Left cardiac atrium (tissue), 4 donors: ENCODE measurements at regions of chr12 and their contacts with region 1.

Region 1: DNA sequence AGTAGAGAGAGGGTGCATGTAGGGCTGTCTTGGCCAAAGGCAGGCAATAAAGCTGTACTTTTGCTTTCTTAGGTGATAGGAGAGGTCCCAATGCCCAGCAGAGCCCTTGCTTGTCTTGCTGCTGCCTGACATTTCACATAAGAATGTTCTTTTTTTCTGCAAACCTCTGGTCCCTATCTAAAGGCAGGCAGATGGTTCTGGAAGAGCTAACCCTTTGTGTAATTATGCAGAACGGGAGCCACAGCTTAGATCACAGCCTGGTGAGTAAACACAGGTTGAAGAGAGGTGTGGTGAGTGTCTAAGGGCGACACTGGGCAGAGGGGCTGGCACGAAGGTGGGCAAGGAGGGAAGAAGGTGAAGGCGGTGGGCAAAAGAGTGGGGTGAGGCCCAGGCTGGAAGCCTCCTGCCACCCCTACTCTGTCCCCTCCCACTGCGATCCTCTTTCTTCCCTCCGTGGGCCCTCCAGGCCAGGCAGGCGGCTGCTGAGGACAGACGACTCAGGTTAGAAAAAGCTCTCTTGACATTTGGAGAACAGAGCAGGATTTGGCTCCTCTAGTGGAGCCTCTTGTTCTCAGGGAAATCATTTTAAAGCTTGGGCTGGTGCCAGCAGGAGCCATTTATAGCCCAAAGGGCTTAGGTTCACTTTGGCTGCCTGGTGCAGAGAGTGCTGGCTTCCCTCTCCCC is 42.8 kb downstream of the PRMT8 start:
- DNase-seq: peak; percentile 70
- ATAC-seq: peak; percentile 64 to 79

Region 2: DNA sequence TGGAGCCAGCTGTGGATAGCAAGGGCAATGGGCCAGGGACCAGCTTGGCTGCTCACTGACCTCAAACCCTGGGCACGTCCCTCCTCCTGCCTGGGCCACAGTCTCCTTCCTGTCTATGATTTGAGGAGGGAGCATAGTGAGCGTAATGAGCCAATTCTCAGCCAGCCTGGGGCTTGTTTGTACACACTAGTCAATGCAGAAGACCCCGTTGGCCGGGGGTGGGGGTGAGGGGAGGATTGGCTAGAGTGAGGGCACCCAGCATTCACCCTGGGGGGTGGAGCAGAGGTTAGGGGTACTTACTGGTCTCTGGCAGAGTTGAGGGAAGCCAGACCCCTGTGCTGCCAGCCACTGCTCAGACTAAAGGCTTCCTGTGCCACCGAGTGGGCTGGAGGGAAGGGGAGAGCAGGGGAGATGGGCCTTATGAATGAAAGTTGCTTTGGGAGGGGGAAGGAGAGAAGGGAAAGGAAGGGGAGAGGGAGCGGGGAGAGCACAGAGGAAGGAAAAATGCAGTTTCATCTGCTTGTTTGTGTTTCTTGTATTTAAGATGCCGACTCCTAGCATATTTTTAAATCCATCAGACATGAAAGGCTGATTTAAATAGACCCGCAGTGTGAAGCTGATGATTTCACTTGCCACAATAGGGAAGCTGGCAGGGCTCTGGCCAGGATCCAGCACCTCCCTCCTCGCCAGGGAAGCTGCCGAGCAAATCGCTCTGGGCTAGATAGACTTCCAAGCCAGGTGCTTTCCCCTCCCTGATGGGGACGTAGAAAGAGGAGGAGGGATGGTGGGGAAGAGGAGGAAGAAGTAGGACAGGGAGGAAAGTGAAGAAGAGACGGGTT is 71.1 kb after region 1 on chr12:
- intact Hi-C with region 1: loop called in 1 of 2 experiments (anchors 5 kb)
- DNase-seq: peak; percentile 72
- ATAC-seq: peak; percentile 79 to 83

Region 3: GRCh38 chr12:3920351-3921150 is 386.7 kb after region 1 on chr12:
- intact Hi-C with region 1: no loop called
- DNase-seq: no peak
- ATAC-seq: no peak